ENCODE measurements at regions of chr16 and their contacts with region 1.

Region 1: GRCh38 chr16:66357153-66357928 is 9.2 kb upstream of the CDH5 start:
- DNase-seq: peak; percentile 76
- H3K4me3 ChIP-seq: no peak overlapping the region
- H3K27ac ChIP-seq: no peak overlapping the region
- H3K4me1 ChIP-seq: peaks cover 0 to 9% of the 10 kb centered on the region in 2 experiments; a peak in 1 of 4 replicates
- H3K27me3 ChIP-seq: peaks cover 16% of the 10 kb centered on the region; the same call in 1 of the 2 replicates
- CTCF ChIP-seq: peak; percentile 84
- EP300 ChIP-seq: no peak
- RAD21 ChIP-seq: peak; percentile 57

Region 2: DNA sequence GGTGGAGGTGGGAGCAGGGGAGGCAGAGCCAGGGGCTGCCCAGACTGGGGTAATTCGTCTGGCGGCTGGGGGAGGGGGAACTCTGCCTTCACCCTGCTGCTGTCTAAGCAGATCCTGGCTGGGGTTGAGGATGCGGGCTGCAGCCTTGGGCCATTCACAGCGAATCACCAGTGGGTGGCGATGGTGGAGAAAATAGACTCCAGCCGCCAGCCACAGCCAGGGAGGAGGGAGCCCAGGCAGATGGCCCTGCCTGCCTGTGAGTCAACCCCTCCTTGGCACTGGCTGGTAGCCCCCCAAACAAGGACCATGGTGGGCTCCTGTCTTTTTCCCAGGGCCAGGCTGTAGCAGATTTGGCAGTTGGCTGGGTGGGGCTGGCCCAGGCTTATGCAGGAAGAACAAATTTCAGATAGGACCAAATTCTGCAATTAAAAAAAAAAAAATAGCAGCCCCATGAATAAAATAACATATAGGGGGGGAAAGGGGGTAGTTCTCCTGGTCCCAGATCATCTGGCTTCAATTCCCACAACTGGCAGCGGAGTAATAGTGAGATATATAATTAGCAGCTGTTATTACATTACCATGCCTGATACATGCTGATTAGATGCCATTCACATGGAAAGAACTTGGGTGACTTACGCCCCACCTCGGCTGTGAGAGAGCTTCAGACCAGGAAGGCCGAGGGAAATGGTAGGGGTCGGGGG is 32.4 kb before region 1 on chr16:
- CTCF ChIA-PET with region 1: interaction called, 12 read pairs
- POLR2A ChIA-PET with region 1: no interaction called
- DNase-seq: peak; percentile 79
- H3K4me3 ChIP-seq: no peak overlapping the region
- H3K27ac ChIP-seq: no peak overlapping the region
- H3K4me1 ChIP-seq: peaks cover 0 to 15% of the 10 kb centered on the region in 2 experiments; a peak in 1 of 4 replicates
- H3K27me3 ChIP-seq: peaks cover 7% of the 10 kb centered on the region; the same call in 1 of the 2 replicates
- CTCF ChIP-seq: peak; percentile 47
- EP300 ChIP-seq: no peak
- RAD21 ChIP-seq: peak; percentile 44

Region 3: GRCh38 chr16:66335704-66336329 is 21.5 kb before region 1 on chr16:
- CTCF ChIA-PET with region 1: interaction called, 143 read pairs
- POLR2A ChIA-PET with region 1: no interaction called
- DNase-seq: no peak
- H3K4me3 ChIP-seq: no peak overlapping the region
- H3K27ac ChIP-seq: no peak overlapping the region
- H3K4me1 ChIP-seq: no peaks in the 10 kb centered on the region; a peak in 1 of 4 replicates
- H3K27me3 ChIP-seq: peaks cover 3% of the 10 kb centered on the region
- CTCF ChIP-seq: no peak
- EP300 ChIP-seq: no peak
- RAD21 ChIP-seq: no peak

Region 4: DNA sequence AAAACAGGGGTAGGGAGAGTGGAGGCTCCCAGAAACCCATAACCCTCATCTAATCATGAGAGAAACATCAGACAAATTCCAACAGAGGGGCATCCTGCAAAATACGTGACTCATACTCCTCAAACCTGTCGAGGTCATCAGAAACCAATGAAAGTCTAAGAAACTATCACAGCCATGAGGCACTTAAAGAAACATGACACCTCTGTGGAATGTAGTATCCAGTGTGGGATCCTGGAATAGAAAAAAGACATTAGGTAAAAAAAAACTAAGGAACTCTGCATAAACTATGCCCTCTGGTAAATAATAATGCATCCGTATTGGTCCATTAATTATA is 25.6 kb after region 1 on chr16:
- CTCF ChIA-PET with region 1: interaction called, 16 read pairs
- POLR2A ChIA-PET with region 1: no interaction called
- DNase-seq: no peak
- H3K4me3 ChIP-seq: no peak overlapping the region
- H3K27ac ChIP-seq: peak overlapping the region in 1 of 2 experiments; percentile 81; a peak in 2 of 4 replicates
- H3K4me1 ChIP-seq: no peaks in the 10 kb centered on the region; a peak in 1 of 4 replicates
- H3K27me3 ChIP-seq: no peaks in the 10 kb centered on the region
- CTCF ChIP-seq: no peak
- EP300 ChIP-seq: 0 out of 4 replicates have a peak, but pooled peaks of 1 of the 2 experiments have one; percentile 20
- RAD21 ChIP-seq: no peak

Region 5: GRCh38 chr16:66476328-66477027 is 119.1 kb after region 1 on chr16:
- CTCF ChIA-PET with region 1: interaction called, 11 read pairs
- POLR2A ChIA-PET with region 1: no interaction called
- DNase-seq: peak; percentile 68
- H3K4me3 ChIP-seq: no peak overlapping the region
- H3K27ac ChIP-seq: no peak overlapping the region
- H3K4me1 ChIP-seq: peaks cover 0 to 2% of the 10 kb centered on the region in 2 experiments; a peak in 1 of 4 replicates
- H3K27me3 ChIP-seq: no peaks in the 10 kb centered on the region
- CTCF ChIP-seq: no peak
- EP300 ChIP-seq: no peak
- RAD21 ChIP-seq: no peak